Dorsolateral prefrontal cortex (tissue), 120 donors: ENCODE measurements at regions of chr9 and their contacts with region 1.

Region 1: GRCh38 chr9:129823935-129824601 is at the start of gene TOR1A:
- DNase-seq: peak; percentile 88 to 96 (median 93)
- H3K4me3 ChIP-seq: peak within 1 kb of the TSS; percentile 42 to 94 (median 81)
- H3K27ac ChIP-seq: peak within 1 kb of the TSS in 58 of 59 donors; percentile 44 to 91 (median 82)
- H3K27me3 ChIP-seq: no peaks in the 10 kb centered on the region
- CTCF ChIP-seq: peak in 36 of 56 donors; percentile 4 to 61 (median 31)
- total RNA-seq, gene TOR1A: 20.2 to 42.3 (median 31.4) TPM

Region 2: DNA sequence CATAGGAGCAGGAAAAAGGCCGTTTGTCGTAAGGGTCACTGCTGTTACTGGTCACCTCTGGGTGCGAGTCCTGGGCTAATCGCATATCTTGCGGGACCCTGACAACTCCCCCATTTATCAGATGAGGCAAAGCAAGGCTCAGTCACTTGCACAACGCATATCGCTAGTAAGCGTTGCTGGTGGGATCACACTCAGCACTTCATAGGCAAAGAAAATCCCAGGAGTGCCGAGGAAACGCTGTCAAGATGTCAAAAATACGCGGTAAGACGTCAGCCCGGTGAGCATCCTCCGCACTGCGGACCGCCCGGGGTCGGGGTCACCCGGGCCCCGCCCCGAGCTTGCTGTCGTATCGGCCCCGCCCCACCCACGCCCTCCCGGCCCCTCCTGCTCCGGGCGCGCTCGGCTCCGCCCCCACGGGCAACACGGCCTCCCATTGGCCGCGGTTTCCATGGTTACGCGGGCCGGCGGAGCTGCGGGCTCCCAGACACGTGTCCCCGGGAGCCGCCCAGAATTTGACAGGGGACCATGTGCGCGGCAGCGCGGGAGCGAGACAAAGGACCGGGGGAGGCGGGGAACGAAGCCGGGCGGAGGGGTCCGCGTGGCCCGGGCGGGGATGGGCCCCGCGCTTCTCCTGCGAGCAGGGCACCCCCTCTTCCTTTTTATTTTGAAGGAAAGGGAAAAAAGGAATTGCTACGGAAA is 565.8 kb before region 1 on chr9:
- intact Hi-C with region 1: no loop called
- DNase-seq: peak; percentile 85 to 97 (median 94)
- H3K4me3 ChIP-seq: peak overlapping the region; percentile 18 to 66 (median 52)
- H3K27ac ChIP-seq: peak overlapping the region in 50 of 59 donors; percentile 2 to 86 (median 64)
- H3K27me3 ChIP-seq: no peaks in the 10 kb centered on the region
- CTCF ChIP-seq: no peak

Region 3: DNA sequence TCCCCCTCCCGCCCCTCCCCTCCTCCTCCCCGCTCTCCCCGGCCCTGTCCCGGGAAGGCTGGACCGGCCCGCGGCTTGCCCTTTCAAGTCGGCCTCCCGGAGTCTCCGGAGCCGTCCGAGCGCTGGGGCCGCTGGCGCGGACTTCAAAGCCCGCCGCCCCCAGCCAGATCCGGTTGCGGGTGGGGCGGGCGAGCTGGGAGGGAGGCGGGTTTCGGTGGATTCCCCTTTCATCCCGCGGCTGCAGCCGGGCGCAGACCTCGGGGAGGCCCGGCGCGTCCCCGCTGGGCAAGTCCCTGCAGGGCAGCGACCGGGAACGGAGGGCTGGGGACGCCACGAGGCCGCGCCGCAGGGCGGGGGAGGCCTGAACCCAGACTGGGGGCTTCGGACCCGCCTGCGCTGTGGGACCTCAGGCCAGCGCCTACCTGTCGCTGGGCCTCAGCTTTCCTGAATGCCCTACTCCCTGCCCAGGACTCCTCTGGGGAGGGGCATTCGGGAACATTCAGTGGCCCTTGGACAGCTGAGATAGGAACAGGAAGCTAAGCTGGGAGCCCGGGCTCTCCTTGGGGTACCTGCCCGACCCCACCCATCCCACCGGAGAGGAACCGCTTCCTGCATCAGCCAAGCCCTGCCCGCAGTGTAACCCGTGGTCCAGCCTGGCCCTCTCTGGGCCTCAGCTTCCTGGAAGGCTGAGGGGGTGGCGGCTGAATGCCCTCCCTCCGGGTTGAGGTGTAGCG is 226.5 kb before region 1 on chr9:
- intact Hi-C with region 1: no loop called
- DNase-seq: no peak
- H3K4me3 ChIP-seq: peak overlapping the region in 56 of 59 donors; percentile 16 to 64 (median 44)
- H3K27ac ChIP-seq: peak overlapping the region in 55 of 59 donors; percentile 17 to 90 (median 81)
- H3K27me3 ChIP-seq: peaks cover 0 to 18% (median 4%) of the 10 kb centered on the region in 45 donors
- CTCF ChIP-seq: no peak

Region 4: DNA sequence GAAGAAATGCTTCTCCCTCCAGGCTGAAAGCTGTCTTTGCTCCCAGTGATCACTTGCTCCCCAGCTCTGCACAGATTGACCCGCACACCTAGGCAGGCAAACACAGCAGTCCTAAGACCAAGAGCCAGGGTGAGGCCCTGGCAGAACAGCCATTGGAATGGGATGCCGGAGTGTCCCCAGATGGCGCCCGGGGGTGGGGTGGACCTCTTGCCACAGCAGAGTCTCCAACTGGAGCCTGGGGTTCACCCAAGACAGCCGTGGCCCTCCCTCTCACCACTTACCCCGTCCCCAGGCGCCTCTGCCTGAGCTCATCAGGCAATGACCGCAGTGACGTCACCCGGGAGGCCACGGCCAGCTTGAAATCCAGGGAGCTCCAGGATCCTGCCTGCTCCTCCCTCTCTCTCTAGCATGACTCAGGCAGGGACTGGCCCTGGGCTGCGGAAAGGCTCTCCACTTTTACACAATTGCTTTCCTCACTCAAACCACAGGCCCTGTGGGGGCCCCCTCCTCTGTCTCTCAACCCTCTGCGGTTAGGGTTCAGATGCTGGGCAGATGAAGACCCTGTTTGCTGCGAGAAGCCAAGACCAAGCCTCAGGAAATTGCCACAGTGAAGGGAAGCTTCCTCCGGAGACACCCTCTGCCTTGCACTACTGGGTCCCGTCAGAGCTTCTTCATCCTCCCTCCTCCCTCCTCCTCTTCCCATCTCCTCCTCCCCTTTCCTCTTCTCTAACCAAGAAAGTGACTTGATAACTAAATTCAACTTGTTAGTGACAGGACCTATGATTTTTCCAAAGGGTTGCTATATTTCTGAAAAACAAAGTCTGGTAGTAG is 46.9 kb before region 1 on chr9:
- intact Hi-C with region 1: no loop called
- DNase-seq: peak; percentile 51 to 85 (median 68)
- H3K4me3 ChIP-seq: peak overlapping the region in 14 of 59 donors; percentile 2 to 43 (median 24)
- H3K27ac ChIP-seq: peak overlapping the region in 12 of 59 donors; percentile 0 to 68 (median 26)
- H3K27me3 ChIP-seq: no peaks in the 10 kb centered on the region
- CTCF ChIP-seq: no peak

Region 5: GRCh38 chr9:129802851-129803675 is 21.0 kb before region 1 on chr9 and contains the start of gene TOR1B:
- intact Hi-C with region 1: loop called in 1 of 2 experiments (anchors 1 kb)
- DNase-seq: peak; percentile 83 to 97 (median 93)
- H3K4me3 ChIP-seq: peak within 1 kb of the TSS; percentile 70 to 95 (median 86)
- H3K27ac ChIP-seq: peak within 1 kb of the TSS; percentile 49 to 92 (median 83)
- H3K27me3 ChIP-seq: no peaks in the 10 kb centered on the region
- CTCF ChIP-seq: peak in 39 of 56 donors; percentile 5 to 47 (median 26)
- total RNA-seq, gene TOR1B: 14.5 to 27.9 (median 20.1) TPM

Region 6: GRCh38 chr9:129835021-129835871 is 11.2 kb after region 1 on chr9 and contains the starts of genes C9orf78 and USP20:
- intact Hi-C with region 1: loop called in 1 of 2 experiments (anchors 1 kb)
- DNase-seq: peak; percentile 85 to 99 (median 94)
- H3K4me3 ChIP-seq: peak within 1 kb of the TSS; percentile 70 to 100 (median 96)
- H3K27ac ChIP-seq: peak within 1 kb of the TSS in 54 of 59 donors; percentile 0 to 93 (median 78)
- H3K27me3 ChIP-seq: no peaks in the 10 kb centered on the region
- CTCF ChIP-seq: peak in 32 of 56 donors; percentile 9 to 59 (median 30)
- total RNA-seq, gene C9orf78: 33.2 to 64.4 (median 43.1) TPM
- total RNA-seq, gene USP20: 44.3 to 74.1 (median 56.9) TPM